Caco-2 (cell line): ENCODE measurements at regions of chr16 and their contacts with region 1.

Region 1: DNA sequence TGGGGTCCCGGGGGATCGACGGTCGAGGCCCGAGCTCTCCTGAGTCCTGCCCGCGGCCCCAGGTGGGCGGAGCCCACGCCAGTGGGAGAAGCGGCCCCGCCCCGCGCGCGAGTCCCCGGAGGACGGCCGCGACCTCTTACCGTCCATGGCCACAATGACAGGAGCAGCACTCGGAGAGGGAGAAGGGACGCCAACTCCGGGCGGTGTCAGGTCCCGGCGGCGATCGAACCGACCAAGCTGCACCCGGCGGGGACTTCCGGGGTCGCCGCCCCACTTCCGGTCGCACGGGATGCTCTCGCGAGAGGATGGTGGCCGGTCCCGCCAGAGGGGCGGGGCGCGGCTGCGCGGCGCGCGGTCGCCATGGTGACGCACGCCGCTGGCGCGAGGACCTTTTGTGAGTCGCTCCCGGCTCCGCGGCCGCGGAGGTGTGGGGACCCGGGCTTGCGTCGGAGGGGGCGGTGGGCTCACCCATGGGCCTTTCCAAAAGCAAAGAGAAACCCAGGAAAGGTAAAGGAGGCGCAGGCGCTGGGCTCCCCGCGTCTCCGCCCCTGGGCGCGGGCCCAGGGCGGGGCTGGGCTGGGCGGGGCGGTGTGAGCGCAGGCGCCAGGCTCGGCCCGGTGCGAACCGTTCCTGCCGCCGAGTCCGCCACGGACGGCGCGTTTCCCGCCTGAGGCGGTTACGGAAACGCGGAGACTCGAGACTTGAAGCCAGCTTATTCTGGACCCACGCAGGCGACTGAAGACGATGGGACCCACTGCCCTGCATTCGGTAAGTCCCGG is at the starts of genes CHMP1A and SPATA33:
- DNase-seq: peak; percentile 93 to 97
- H3K4me3 ChIP-seq: peak within 1 kb of the TSS; percentile 99
- H3K4me3 Mint-ChIP-seq: peak within 1 kb of the TSS; percentile 95
- H3K27ac Mint-ChIP-seq: peak within 1 kb of the TSS; percentile 94
- H3K4me1 ChIP-seq: no peaks in the 10 kb centered on the region
- H3K4me1 Mint-ChIP-seq: peaks cover 8% of the 10 kb centered on the region
- H3K27me3 ChIP-seq: no peaks in the 10 kb centered on the region
- H3K27me3 Mint-ChIP-seq: no peaks in the 10 kb centered on the region
- CTCF ChIP-seq: no peak
- total RNA-seq, gene CHMP1A: 150 and 159 TPM in 2 replicates
- total RNA-seq, gene SPATA33: 19.7 and 29.1 TPM in 2 replicates

Region 2: GRCh38 chr16:89623511-89624261 is 33.9 kb before region 1 on chr16:
- CTCF ChIA-PET with region 1: no interaction called
- POLR2A ChIA-PET with region 1: no interaction called
- intact Hi-C with region 1: no loop called
- DNase-seq: no peak
- H3K4me3 ChIP-seq: no peak overlapping the region
- H3K4me3 Mint-ChIP-seq: no peak overlapping the region
- H3K27ac Mint-ChIP-seq: peak overlapping the region; percentile 64
- H3K4me1 ChIP-seq: peaks cover 40% of the 10 kb centered on the region
- H3K4me1 Mint-ChIP-seq: peaks cover 25% of the 10 kb centered on the region
- H3K27me3 ChIP-seq: no peaks in the 10 kb centered on the region
- H3K27me3 Mint-ChIP-seq: no peaks in the 10 kb centered on the region
- CTCF ChIP-seq: no peak

Region 3: DNA sequence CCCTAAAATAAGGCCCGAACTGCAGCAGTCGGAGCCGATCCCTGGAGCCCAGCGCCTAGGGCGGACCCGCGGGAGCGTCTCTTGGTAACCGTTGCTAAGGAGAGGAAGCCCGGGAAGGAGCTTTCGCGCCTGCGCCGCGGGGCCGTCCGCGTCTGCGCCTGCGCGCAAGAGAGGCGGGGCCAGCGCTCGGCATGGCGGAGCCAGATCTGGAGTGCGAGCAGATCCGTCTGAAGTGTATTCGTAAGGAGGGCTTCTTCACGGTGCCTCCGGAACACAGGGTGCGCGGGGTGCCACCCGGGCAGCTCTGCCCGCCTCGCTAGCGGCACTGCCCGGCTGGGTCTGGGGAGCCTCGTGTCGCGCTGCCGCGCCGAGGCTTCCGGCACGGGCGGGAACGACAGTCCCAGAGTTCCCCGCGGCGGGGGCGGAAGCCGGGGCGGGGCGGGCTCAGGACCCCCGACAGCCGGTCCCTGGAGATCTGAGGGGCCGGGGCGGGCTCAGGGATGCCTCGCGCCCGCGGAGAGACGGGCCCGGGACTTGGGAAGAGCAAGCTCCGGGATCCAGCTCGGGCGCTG is 29.0 kb after region 1 on chr16 and contains the start of gene CDK10:
- CTCF ChIA-PET with region 1: no interaction called
- POLR2A ChIA-PET with region 1: interaction called, 6 read pairs
- intact Hi-C with region 1: loop called (anchors 2 kb)
- DNase-seq: peak; percentile 93 to 98
- H3K4me3 ChIP-seq: peak within 1 kb of the TSS; percentile 93
- H3K4me3 Mint-ChIP-seq: peak within 1 kb of the TSS; percentile 71
- H3K27ac Mint-ChIP-seq: peak within 1 kb of the TSS; percentile 77
- H3K4me1 ChIP-seq: peaks cover 10% of the 10 kb centered on the region
- H3K4me1 Mint-ChIP-seq: peaks cover 6% of the 10 kb centered on the region
- H3K27me3 ChIP-seq: no peaks in the 10 kb centered on the region
- H3K27me3 Mint-ChIP-seq: no peaks in the 10 kb centered on the region
- CTCF ChIP-seq: no peak
- total RNA-seq, gene CDK10: 135 and 140 TPM in 2 replicates